SK-N-SH (cell line): ENCODE measurements at regions of chr2 and their contacts with region 1.

Region 1: DNA sequence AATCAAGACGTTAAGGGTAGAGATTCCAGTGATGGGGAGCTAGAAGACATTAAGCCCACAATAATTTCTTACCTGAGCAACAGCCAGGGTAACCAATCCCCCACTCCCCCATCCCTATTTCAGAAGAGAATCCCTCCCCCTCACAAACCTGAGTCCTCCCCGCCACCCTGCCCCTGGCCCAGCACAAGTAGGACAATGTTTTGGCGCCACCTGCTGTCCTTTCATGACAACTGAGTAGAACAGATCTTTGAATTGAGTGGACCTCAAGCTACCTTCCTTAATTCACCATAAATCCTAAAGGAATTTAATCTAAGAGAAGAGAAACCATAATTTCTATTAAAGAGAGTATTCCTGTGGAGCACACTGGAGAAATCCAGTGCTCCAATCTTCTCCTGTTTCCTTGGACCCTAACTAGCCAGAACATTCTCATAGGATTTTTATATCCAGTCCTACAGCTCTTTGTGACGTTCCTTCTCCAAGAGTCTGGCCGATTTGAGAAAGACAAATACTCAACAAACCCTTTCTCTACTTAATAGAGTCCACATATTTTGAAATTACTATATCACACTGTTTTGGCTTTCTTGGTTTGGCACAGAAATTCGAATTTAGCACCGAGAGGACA is 41.1 kb downstream of the NHEJ1 start:
- DNase-seq: peak; percentile 77
- H3K4me3 ChIP-seq: no peak overlapping the region; a peak in 1 of 4 replicates
- H3K27ac ChIP-seq: no peak overlapping the region
- H3K4me1 ChIP-seq: no peaks in the 10 kb centered on the region; a peak in 2 of 4 replicates
- H3K27me3 ChIP-seq: no peaks in the 10 kb centered on the region
- CTCF ChIP-seq: peak; percentile 82
- EP300 ChIP-seq: no peak
- RAD21 ChIP-seq: peak; percentile 86

Region 2: GRCh38 chr2:218876562-218877219 is 242.8 kb before region 1 on chr2:
- CTCF ChIA-PET with region 1: interaction called, 23 read pairs
- POLR2A ChIA-PET with region 1: no interaction called
- DNase-seq: peak; percentile 88
- H3K4me3 ChIP-seq: no peak overlapping the region
- H3K27ac ChIP-seq: peak overlapping the region in 1 of 2 experiments; percentile 78; a peak in 2 of 4 replicates
- H3K4me1 ChIP-seq: peaks cover 0 to 54% of the 10 kb centered on the region in 2 experiments; a peak in 2 of 4 replicates
- H3K27me3 ChIP-seq: peaks cover 39% of the 10 kb centered on the region
- CTCF ChIP-seq: peak; percentile 95
- EP300 ChIP-seq: peak in 1 of 2 experiments; percentile 26; a peak in 1 of 4 replicates
- RAD21 ChIP-seq: peak; percentile 95

Region 3: GRCh38 chr2:219002395-219003266 is 116.9 kb before region 1 on chr2:
- CTCF ChIA-PET with region 1: interaction called, 111 read pairs
- POLR2A ChIA-PET with region 1: no interaction called
- DNase-seq: peak; percentile 89
- H3K4me3 ChIP-seq: peak overlapping the region; percentile 51 to 54
- H3K27ac ChIP-seq: peak overlapping the region in 1 of 2 experiments; percentile 99; a peak in 2 of 4 replicates
- H3K4me1 ChIP-seq: peaks cover 0 to 60% of the 10 kb centered on the region in 2 experiments; a peak in 2 of 4 replicates
- H3K27me3 ChIP-seq: peaks cover 18% of the 10 kb centered on the region; the same call in 1 of the 2 replicates
- CTCF ChIP-seq: peak; percentile 35; the same call in 1 of the 2 replicates
- EP300 ChIP-seq: no peak
- RAD21 ChIP-seq: peak; percentile 66

Region 4: GRCh38 chr2:219041252-219041651 is 78.3 kb before region 1 on chr2 and contains the start of gene CFAP65:
- CTCF ChIA-PET with region 1: interaction called, 15 read pairs
- POLR2A ChIA-PET with region 1: no interaction called
- DNase-seq: peak; percentile 84
- H3K4me3 ChIP-seq: peak within 1 kb of the TSS; percentile 74 to 78
- H3K27ac ChIP-seq: no peak within 1 kb of the TSS
- H3K4me1 ChIP-seq: peaks cover 4 to 6% of the 10 kb centered on the region in 2 experiments; a peak in 1 of 4 replicates
- H3K27me3 ChIP-seq: no peaks in the 10 kb centered on the region
- CTCF ChIP-seq: no peak
- EP300 ChIP-seq: 0 out of 4 replicates have a peak, but pooled peaks of 1 of the 2 experiments have one; percentile 19
- RAD21 ChIP-seq: no peak
- polyA plus RNA-seq, gene CFAP65: 0.95 and 1.7 TPM in 2 replicates

Region 5: GRCh38 chr2:219073413-219074129 is 46.0 kb before region 1 on chr2:
- CTCF ChIA-PET with region 1: interaction called, 46 read pairs
- POLR2A ChIA-PET with region 1: no interaction called
- DNase-seq: peak; percentile 68
- H3K4me3 ChIP-seq: no peak overlapping the region
- H3K27ac ChIP-seq: no peak overlapping the region
- H3K4me1 ChIP-seq: no peaks in the 10 kb centered on the region
- H3K27me3 ChIP-seq: no peaks in the 10 kb centered on the region
- CTCF ChIP-seq: peak; percentile 63
- EP300 ChIP-seq: no peak
- RAD21 ChIP-seq: peak; percentile 59

Region 6: DNA sequence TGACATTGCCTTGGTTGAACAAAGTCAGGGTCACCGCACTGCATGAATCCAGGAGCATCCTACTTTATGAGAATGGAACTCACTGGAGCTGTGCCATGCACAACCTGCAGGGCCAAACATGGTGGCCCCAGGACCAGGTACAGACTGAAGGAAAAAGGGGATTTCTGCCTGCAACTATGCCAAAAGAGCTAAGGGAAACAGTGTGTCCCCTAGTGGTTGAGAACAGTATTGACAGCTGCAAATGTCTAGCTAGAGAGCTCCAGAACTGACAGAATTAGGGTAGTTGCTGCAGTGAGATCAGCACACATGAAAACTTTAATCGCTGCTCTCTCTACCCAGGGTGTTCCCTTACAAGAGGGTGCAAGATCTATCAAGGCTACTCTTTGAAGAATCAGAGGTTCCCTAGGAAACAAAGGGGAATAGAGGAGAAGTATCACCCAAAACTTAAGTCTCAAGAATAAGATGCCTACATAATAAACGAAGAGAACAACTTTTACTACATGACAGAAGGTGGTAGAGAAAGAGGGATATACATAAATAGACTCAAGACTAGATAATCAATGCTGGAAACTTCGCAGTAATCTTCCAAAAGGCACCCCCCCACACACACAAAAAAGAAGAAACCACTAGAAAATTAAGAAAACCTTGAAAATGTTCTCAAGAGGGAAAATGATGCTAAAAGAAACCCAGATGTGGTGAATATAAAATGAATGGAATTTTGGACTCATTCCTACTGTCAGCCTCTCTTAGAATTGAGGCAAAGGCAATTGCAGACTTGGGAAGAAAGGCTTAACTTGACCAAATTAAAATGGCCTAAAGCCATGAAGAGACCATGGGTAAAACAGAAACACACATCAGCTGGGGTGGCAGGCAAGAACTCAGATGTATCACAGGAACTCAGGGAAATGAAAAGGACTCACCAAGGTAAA is 15.2 kb before region 1 on chr2:
- CTCF ChIA-PET with region 1: interaction called, 73 read pairs
- POLR2A ChIA-PET with region 1: no interaction called
- DNase-seq: peak; percentile 66
- H3K4me3 ChIP-seq: no peak overlapping the region; a peak in 1 of 4 replicates
- H3K27ac ChIP-seq: no peak overlapping the region
- H3K4me1 ChIP-seq: no peaks in the 10 kb centered on the region
- H3K27me3 ChIP-seq: no peaks in the 10 kb centered on the region
- CTCF ChIP-seq: peak; percentile 71
- EP300 ChIP-seq: no peak
- RAD21 ChIP-seq: peak; percentile 70

Region 7: DNA sequence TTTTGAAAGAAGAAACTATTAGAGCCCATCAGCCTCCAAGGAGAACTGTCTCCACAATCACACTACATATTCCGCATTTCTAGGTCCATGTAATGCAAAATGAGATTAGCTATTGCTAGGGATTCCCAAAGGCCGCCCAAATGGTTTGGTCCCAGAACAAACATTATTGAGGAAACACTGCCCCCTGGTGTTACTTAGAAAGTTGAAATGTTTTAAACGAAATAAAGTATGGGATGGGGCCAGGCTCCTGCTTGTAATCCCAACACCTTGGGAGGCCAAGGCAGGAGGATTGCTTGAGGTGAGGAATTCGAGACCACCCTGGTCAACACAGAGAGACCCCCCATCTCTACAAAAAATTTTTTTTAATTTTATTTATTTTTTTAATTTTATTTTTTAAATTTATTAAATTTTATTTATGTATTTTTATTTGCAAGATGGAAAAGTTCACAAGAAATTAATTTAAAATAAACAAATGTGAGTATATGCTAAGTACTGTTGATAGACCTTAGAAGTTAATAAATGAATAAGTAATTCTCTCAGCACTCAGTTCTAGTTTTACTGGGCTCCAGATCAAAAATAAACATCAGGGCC is 35.6 kb after region 1 on chr2:
- CTCF ChIA-PET with region 1: interaction called, 40 read pairs
- POLR2A ChIA-PET with region 1: no interaction called
- DNase-seq: peak; percentile 73
- H3K4me3 ChIP-seq: no peak overlapping the region
- H3K27ac ChIP-seq: no peak overlapping the region
- H3K4me1 ChIP-seq: peaks cover 0 to 5% of the 10 kb centered on the region in 2 experiments; a peak in 1 of 4 replicates
- H3K27me3 ChIP-seq: no peaks in the 10 kb centered on the region
- CTCF ChIP-seq: peak; percentile 67
- EP300 ChIP-seq: no peak
- RAD21 ChIP-seq: peak; percentile 90